ENCODE measurements at regions of chr15 and their contacts with region 1.

Region 1: DNA sequence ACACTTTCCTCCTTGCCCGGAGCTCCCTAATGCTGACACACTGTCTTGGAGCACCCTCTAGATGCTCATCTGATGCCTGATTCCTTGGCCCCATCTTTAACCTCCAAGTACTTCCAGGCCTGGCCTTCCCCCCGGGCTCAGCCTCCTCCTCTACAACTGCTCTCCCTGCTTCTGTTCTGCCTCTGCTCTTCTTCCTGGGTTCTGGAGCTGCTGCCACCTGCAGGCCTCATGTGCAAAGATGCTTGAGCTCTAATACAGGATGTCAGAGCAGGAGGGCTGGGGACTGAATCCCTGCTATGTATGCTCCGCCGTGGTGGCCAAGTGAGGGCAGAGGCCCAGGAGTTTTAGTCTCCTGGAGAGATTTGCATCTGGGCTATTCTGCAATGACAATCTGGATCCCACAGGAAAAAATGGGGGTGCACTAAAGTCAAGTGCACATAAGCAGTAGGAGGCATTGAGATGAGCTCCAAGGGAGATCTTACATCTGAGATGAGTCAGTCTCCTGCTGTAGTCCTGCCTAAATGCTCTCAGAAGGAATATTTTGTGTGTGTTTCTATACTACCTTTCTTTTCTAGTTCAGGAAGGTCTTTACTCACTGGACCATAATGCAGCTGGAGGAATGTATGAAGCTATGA is 296.3 kb downstream of the UACA start:
- DNase-seq: peak in 1 of 2 donors; percentile 66
- ATAC-seq: peak; percentile 74

Region 2: DNA sequence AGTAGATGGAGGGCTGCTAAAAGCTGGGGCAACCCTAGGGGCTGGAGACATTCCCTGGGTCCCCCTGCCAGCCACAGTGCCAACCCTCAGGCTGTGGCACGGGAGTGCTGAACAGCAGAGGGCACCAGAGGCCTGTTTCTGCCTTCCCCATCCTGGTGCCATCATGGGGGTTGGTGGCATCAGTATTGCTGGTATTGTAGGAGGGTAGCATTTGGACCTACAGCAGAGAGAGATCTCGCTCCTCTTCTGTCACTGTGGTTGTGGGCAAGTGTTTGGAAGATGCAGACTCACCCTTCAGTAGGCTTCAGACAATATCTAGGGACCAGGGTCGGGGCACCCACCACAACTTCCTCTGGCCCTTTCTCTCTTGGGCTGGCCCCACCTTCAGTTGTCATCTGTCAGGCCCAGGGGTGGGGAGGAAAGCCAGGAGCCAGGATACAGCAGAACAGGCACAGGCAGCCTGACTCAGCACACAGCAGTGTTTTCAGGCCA is 890.9 kb before region 1 on chr15:
- intact Hi-C with region 1: loop called in 1 of 2 experiments (anchors 10 kb)
- DNase-seq: peak; percentile 49 to 81
- ATAC-seq: peak; percentile 65

Region 3: DNA sequence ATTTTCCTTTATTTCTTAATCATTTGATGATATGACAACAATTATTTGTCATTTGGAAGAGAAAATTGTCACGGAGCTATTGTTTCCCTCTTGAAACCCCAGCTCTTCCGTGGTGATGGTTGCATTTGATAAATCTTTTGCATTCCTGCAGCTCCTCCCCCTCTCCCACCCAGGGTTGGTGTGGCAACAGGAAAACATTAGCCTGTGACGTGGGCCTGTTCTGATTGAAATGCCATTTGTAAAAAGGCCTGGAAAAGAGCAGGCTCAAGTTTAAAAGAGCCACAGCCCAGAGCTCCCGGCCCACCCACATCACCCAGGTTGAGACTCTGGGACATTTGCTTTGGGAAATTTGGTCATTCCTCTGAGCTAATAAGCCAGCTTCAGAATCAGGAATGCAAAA is 731.9 kb before region 1 on chr15:
- intact Hi-C with region 1: loop called in 1 of 2 experiments (anchors 10 kb)
- DNase-seq: no peak
- ATAC-seq: no peak

Measured in left colon (tissue), 2 donors.